Caco-2 (cell line): ENCODE measurements at regions of chr15 and their contacts with region 1.

Region 1: GRCh38 chr15:45573961-45574629 is 13.1 kb upstream of the BLOC1S6 start:
- DNase-seq: peak; percentile 54 to 61
- H3K4me3 ChIP-seq: no peak overlapping the region
- H3K4me3 Mint-ChIP-seq: no peak overlapping the region
- H3K27ac Mint-ChIP-seq: no peak overlapping the region
- H3K4me1 ChIP-seq: no peaks in the 10 kb centered on the region
- H3K4me1 Mint-ChIP-seq: no peaks in the 10 kb centered on the region
- H3K27me3 ChIP-seq: no peaks in the 10 kb centered on the region
- H3K27me3 Mint-ChIP-seq: no peaks in the 10 kb centered on the region
- CTCF ChIP-seq: peak; percentile 37 to 63

Region 2: DNA sequence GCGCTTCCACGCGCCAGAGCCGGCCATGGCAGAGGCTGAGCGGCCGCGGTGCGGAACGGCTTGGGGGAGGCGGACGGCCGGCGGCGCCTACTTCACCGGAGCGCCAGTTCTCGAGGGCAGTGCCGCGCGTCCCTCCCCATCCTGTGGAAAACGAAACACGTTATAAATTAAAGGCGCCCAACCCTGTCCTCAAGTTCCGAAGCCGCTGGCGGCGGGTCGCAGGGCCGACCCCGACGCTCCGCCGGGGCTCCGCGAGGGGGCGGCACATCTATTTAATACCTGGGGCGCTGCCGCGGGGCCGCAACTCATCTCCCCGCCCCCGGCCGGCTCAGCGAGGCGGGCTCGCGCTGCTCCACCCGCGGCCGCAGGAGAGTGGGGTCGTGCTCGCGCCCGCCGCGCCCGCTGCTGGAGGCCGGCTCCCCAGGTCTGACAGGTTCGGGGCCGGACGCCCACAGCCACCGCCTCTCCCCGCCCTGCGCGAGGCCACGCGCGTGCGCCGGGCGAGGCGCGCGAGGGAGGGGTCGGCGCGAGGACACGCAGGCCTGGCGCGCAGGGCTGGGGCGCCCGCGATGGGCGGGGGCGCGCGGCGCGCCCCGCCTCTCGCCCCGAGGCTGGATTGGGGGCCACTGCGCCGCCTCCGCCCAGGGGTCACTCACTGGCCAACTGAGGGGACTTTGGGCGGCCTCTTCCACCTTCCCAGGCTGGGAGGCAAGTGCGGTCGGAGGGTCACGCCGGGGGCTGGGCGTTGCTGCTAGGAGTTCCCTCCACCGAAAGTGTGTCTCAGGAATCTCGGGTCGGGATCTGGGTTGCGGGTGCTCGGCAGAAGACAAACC is 51.6 kb before region 1 on chr15 and contains the start of gene SLC30A4:
- CTCF ChIA-PET with region 1: interaction called, 4 read pairs
- POLR2A ChIA-PET with region 1: no interaction called
- intact Hi-C with region 1: loop called (anchors 2 kb)
- DNase-seq: peak; percentile 64 to 70
- H3K4me3 ChIP-seq: peak within 1 kb of the TSS; percentile 71
- H3K4me3 Mint-ChIP-seq: peak within 1 kb of the TSS; percentile 84
- H3K27ac Mint-ChIP-seq: no peak within 1 kb of the TSS
- H3K4me1 ChIP-seq: peaks cover 6% of the 10 kb centered on the region; the same call in 1 of the 2 replicates
- H3K4me1 Mint-ChIP-seq: peaks cover 19% of the 10 kb centered on the region
- H3K27me3 ChIP-seq: no peaks in the 10 kb centered on the region
- H3K27me3 Mint-ChIP-seq: peaks cover 4% of the 10 kb centered on the region
- CTCF ChIP-seq: peak; percentile 26 to 37
- total RNA-seq, gene SLC30A4: 0.61 and 1.2 TPM in 2 replicates